ENCODE measurements at regions of chr16 and their contacts with region 1.

Region 1: GRCh38 chr16:66608241-66609138 is 4.0 kb downstream of the CMTM3 start:
- DNase-seq: peak; percentile 72
- H3K4me3 Mint-ChIP-seq: peak overlapping the region; percentile 57
- H3K27ac Mint-ChIP-seq: peak overlapping the region; percentile 68
- H3K4me1 Mint-ChIP-seq: peaks cover 27% of the 10 kb centered on the region
- H3K27me3 Mint-ChIP-seq: no peaks in the 10 kb centered on the region

Region 2: GRCh38 chr16:65315081-65315780 is 1293.3 kb before region 1 on chr16:
- intact Hi-C with region 1: no loop called
- DNase-seq: no peak
- H3K4me3 Mint-ChIP-seq: no peak overlapping the region
- H3K27ac Mint-ChIP-seq: no peak overlapping the region
- H3K4me1 Mint-ChIP-seq: no peaks in the 10 kb centered on the region
- H3K27me3 Mint-ChIP-seq: no peaks in the 10 kb centered on the region

Region 3: GRCh38 chr16:66516808-66517585 is 91.5 kb before region 1 on chr16:
- intact Hi-C with region 1: loop called (anchors 1 kb)
- DNase-seq: peak; percentile 75
- H3K4me3 Mint-ChIP-seq: peak overlapping the region; percentile 82
- H3K27ac Mint-ChIP-seq: peak overlapping the region; percentile 99
- H3K4me1 Mint-ChIP-seq: peaks cover 59% of the 10 kb centered on the region
- H3K27me3 Mint-ChIP-seq: no peaks in the 10 kb centered on the region

Region 4: GRCh38 chr16:66660422-66661209 is 52.1 kb after region 1 on chr16:
- intact Hi-C with region 1: no loop called
- DNase-seq: no peak
- H3K4me3 Mint-ChIP-seq: no peak overlapping the region
- H3K27ac Mint-ChIP-seq: no peak overlapping the region
- H3K4me1 Mint-ChIP-seq: peaks cover 3% of the 10 kb centered on the region
- H3K27me3 Mint-ChIP-seq: peaks cover 27% of the 10 kb centered on the region

Region 5: GRCh38 chr16:66696669-66697630 is 88.5 kb after region 1 on chr16 and contains the start of gene CMTM4:
- intact Hi-C with region 1: loop called (anchors 5 kb)
- DNase-seq: peak; percentile 71
- H3K4me3 Mint-ChIP-seq: peak within 1 kb of the TSS; percentile 69
- H3K27ac Mint-ChIP-seq: no peak within 1 kb of the TSS
- H3K4me1 Mint-ChIP-seq: peaks cover 9% of the 10 kb centered on the region
- H3K27me3 Mint-ChIP-seq: peaks cover 39% of the 10 kb centered on the region
- total RNA-seq, gene CMTM4: 3.8 and 4.0 TPM in 2 replicates

Region 6: GRCh38 chr16:66844342-66845079 is 236.0 kb after region 1 on chr16 and contains the start of gene CA7:
- intact Hi-C with region 1: no loop called
- DNase-seq: no peak
- H3K4me3 Mint-ChIP-seq: peak within 1 kb of the TSS; percentile 70
- H3K27ac Mint-ChIP-seq: no peak within 1 kb of the TSS
- H3K4me1 Mint-ChIP-seq: peaks cover 22% of the 10 kb centered on the region
- H3K27me3 Mint-ChIP-seq: peaks cover 33% of the 10 kb centered on the region
- total RNA-seq, gene CA7: 0.59 and 1.1 TPM in 2 replicates